Posterior vena cava (tissue), 2 donors: ENCODE measurements at regions of chr10 and their contacts with region 1.

Region 1: DNA sequence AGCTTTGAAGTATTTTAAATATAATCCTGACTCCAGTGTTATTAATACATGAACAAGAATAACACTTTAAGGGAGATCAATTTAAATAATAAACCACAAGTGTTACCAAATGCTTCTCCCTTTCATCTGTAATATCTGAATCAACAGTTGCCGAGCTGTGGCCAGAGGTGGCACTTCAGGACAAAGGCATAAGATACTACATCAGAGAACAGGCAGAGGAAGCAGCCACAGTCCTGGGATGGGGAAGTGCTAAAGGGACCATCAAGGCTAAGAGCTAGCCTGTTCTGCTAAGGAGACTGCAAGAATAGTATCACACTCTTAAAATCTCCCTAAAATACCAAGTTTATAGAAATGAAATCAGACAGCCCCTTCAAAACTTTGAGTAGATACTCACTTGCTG is 378.2 kb upstream of the PRKCQ start:
- DNase-seq: no peak

Region 2: GRCh38 chr10:6364893-6365292 is 593.4 kb before region 1 on chr10:
- intact Hi-C with region 1: no loop called
- DNase-seq: no peak

Region 3: DNA sequence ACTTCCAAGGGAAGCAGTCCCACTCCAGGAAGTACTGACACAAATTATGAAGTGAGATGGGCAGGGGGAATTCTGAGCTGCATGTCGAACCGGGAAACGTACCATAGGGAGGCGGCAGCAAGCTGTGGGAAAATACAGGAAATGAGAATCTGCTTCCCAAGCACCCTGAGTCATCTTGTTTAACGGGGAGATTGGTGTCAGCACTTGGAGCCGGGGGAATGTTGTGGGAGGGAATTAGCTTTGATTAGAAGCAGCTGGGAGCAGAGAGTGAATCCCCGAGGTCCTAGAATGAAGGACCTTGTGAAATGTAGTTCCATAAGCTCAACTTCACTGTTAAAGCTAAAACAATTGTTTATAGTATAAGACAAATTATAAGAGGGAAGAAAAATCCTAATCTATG is 236.8 kb before region 1 on chr10:
- intact Hi-C with region 1: loop called in 1 of 2 experiments (anchors 10 kb)
- DNase-seq: no peak

Region 4: DNA sequence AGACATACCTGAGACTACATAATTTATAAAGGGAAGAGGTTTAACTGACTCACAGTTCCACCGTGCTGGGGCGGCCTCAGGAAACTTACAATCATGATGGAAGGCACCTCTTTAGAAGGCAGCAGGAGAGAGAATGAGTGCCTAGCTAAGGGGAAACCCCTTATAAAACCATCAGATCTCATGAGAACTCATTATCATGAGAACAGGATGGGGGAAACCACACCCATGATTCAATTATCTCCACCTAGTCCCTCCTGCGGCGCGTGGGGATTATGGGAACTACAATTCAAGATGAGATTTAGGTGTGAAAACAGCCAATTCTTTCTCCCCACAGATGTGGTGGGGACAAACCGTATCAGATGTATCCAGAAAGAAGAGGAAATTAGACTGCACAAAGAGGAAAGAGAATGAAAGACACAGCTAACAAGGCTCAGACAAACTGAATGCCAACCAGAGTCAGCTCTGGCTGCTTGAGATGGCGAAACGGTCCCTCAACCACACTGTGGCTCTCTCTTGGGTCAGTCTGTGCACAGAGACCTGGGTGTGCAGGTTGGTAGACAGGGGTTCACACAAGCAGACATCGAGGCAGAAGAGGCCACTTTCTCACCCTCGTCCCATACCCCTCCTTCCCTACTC is 77.0 kb after region 1 on chr10:
- intact Hi-C with region 1: no loop called
- DNase-seq: no peak

Region 5: GRCh38 chr10:7649673-7650300 is 691.5 kb after region 1 on chr10:
- intact Hi-C with region 1: no loop called
- DNase-seq: no peak